Common myeloid progenitor, CD34-positive (primary cell): ENCODE measurements at regions of chr4 and their contacts with region 1.

Region 1: GRCh38 chr4:158729716-158730559 is 6.7 kb upstream of the PPID start:
- DNase-seq: peak; percentile 75 to 84 (median 78)
- H3K4me3 ChIP-seq: no peak overlapping the region
- H3K27ac ChIP-seq: no peak overlapping the region
- H3K4me1 ChIP-seq: no peaks in the 10 kb centered on the region
- H3K27me3 ChIP-seq: peaks cover 0 to 2% (median 0%) of the 10 kb centered on the region in 5 experiments

Region 2: GRCh38 chr4:158845311-158846041 is 115.5 kb after region 1 on chr4:
- CTCF ChIA-PET with region 1: interaction called, 26 read pairs
- POLR2A ChIA-PET with region 1: no interaction called
- DNase-seq: no peak
- H3K4me3 ChIP-seq: no peak overlapping the region
- H3K27ac ChIP-seq: no peak overlapping the region
- H3K4me1 ChIP-seq: peaks cover 0 to 2% (median 0%) of the 10 kb centered on the region in 4 experiments
- H3K27me3 ChIP-seq: no peaks in the 10 kb centered on the region